ENCODE measurements at regions of chr1 and their contacts with region 1.

Region 1: GRCh38 chr1:239386453-239387303 is at the start of gene CHRM3:
- DNase-seq: no peak
- H3K4me3 ChIP-seq: peak within 1 kb of the TSS; percentile 79 to 91 (median 84)
- H3K27ac ChIP-seq: peak within 1 kb of the TSS; percentile 90 to 94 (median 92)
- H3K4me1 ChIP-seq: peaks cover 8 to 41% (median 33%) of the 10 kb centered on the region in 4 donors
- H3K27me3 ChIP-seq: peaks cover 0 to 20% (median 1%) of the 10 kb centered on the region in 4 donors
- CTCF ChIP-seq: peak; percentile 32 to 42 (median 38)
- EP300 ChIP-seq: no peak
- POLR2A ChIP-seq: no peak
- total RNA-seq, gene CHRM3: 75.5 to 118 (median 85.9) TPM

Region 2: GRCh38 chr1:239527051-239527693 is 140.5 kb after region 1 on chr1:
- intact Hi-C with region 1: loop called (anchors 10 kb)
- DNase-seq: no peak
- H3K4me3 ChIP-seq: no peak overlapping the region
- H3K27ac ChIP-seq: peak overlapping the region in 3 of 4 donors; percentile 34 to 52 (median 37)
- H3K4me1 ChIP-seq: peaks cover 0 to 31% (median 30%) of the 10 kb centered on the region in 4 donors
- H3K27me3 ChIP-seq: no peaks in the 10 kb centered on the region
- CTCF ChIP-seq: no peak
- EP300 ChIP-seq: no peak
- POLR2A ChIP-seq: no peak

Region 3: GRCh38 chr1:239676522-239677273 is 290.0 kb after region 1 on chr1:
- intact Hi-C with region 1: no loop called
- DNase-seq: no peak
- H3K4me3 ChIP-seq: no peak overlapping the region
- H3K27ac ChIP-seq: no peak overlapping the region
- H3K4me1 ChIP-seq: peaks cover 0 to 24% (median 1%) of the 10 kb centered on the region in 4 donors
- H3K27me3 ChIP-seq: no peaks in the 10 kb centered on the region
- CTCF ChIP-seq: peak in 1 of 3 experiments; percentile 19
- EP300 ChIP-seq: no peak
- POLR2A ChIP-seq: no peak

Region 4: GRCh38 chr1:239719642-239720258 is 333.1 kb after region 1 on chr1:
- intact Hi-C with region 1: loop called (anchors 10 kb)
- DNase-seq: no peak
- H3K4me3 ChIP-seq: peak overlapping the region in 1 of 4 donors; percentile 4
- H3K27ac ChIP-seq: peak overlapping the region; percentile 6 to 70 (median 59)
- H3K4me1 ChIP-seq: peaks cover 0 to 52% (median 48%) of the 10 kb centered on the region in 4 donors
- H3K27me3 ChIP-seq: no peaks in the 10 kb centered on the region
- CTCF ChIP-seq: no peak
- EP300 ChIP-seq: no peak
- POLR2A ChIP-seq: no peak

Region 5: GRCh38 chr1:239816081-239816812 is 429.6 kb after region 1 on chr1:
- intact Hi-C with region 1: loop called (anchors 5 kb)
- DNase-seq: no peak
- H3K4me3 ChIP-seq: peak overlapping the region in 1 of 4 donors; percentile 39
- H3K27ac ChIP-seq: peak overlapping the region; percentile 85 to 92 (median 88)
- H3K4me1 ChIP-seq: peaks cover 2 to 75% (median 64%) of the 10 kb centered on the region in 4 donors
- H3K27me3 ChIP-seq: no peaks in the 10 kb centered on the region
- CTCF ChIP-seq: no peak
- EP300 ChIP-seq: no peak
- POLR2A ChIP-seq: no peak

Region 6: GRCh38 chr1:239898062-239898730 is 511.5 kb after region 1 on chr1:
- intact Hi-C with region 1: loop called (anchors 2 kb)
- DNase-seq: peak; percentile 96
- H3K4me3 ChIP-seq: peak overlapping the region; percentile 16 to 37 (median 26)
- H3K27ac ChIP-seq: peak overlapping the region; percentile 39 to 63 (median 60)
- H3K4me1 ChIP-seq: peaks cover 0 to 29% (median 25%) of the 10 kb centered on the region in 4 donors
- H3K27me3 ChIP-seq: no peaks in the 10 kb centered on the region
- CTCF ChIP-seq: peak; percentile 92 to 98 (median 93)
- EP300 ChIP-seq: no peak
- POLR2A ChIP-seq: no peak

Measured in esophagus muscularis mucosa (tissue), 4 donors.